Dorsolateral prefrontal cortex (tissue), 120 donors: ENCODE measurements at regions of chr5 and their contacts with region 1.

Region 1: GRCh38 chr5:61408476-61409168 is 76.6 kb downstream of the ZSWIM6 start:
- DNase-seq: peak; percentile 91 to 99 (median 98)
- H3K4me3 ChIP-seq: peak overlapping the region; percentile 1 to 62 (median 41)
- H3K27ac ChIP-seq: peak overlapping the region in 56 of 59 donors; percentile 5 to 85 (median 62)
- H3K27me3 ChIP-seq: no peaks in the 10 kb centered on the region
- CTCF ChIP-seq: peak in 26 of 56 donors; percentile 4 to 58 (median 25)

Region 2: GRCh38 chr5:61603211-61603908 is 194.7 kb after region 1 on chr5:
- intact Hi-C with region 1: loop called in 1 of 2 experiments (anchors 10 kb)
- DNase-seq: peak in 9 of 10 donors; percentile 59 to 82 (median 78)
- H3K4me3 ChIP-seq: peak overlapping the region in 1 of 59 donors; percentile 18
- H3K27ac ChIP-seq: peak overlapping the region in 16 of 59 donors; percentile 3 to 70 (median 38)
- H3K27me3 ChIP-seq: no peaks in the 10 kb centered on the region
- CTCF ChIP-seq: peak in 51 of 56 donors; percentile 19 to 73 (median 47)

Region 3: GRCh38 chr5:61625681-61626621 is 217.3 kb after region 1 on chr5:
- intact Hi-C with region 1: loop called in 1 of 2 experiments (anchors 5 kb)
- DNase-seq: peak; percentile 60 to 90 (median 84)
- H3K4me3 ChIP-seq: peak overlapping the region; percentile 40 to 74 (median 59)
- H3K27ac ChIP-seq: peak overlapping the region; percentile 77 to 99 (median 96)
- H3K27me3 ChIP-seq: no peaks in the 10 kb centered on the region
- CTCF ChIP-seq: peak in 27 of 56 donors; percentile 8 to 52 (median 29)